Activated T-helper 2 cell treated with anti-CD3 and anti-CD28 coated beads, Interferon-gamma antibody, Interleukin-2, Interleukin-4, amounts not matched to agents 10 μg/mL and 5 μg/mL and 100 μg/mL, durations not matched to agents 14 hours and 24 hours and 36 hours (primary cell): ENCODE measurements at regions of chr12 and their contacts with region 1.

Region 1: GRCh38 chr12:122123051-122123760 is 44.6 kb downstream of the MLXIP start:
- DNase-seq: peak; percentile 54
- H3K4me3 Mint-ChIP-seq: no peak overlapping the region
- H3K27ac Mint-ChIP-seq: no peak overlapping the region
- H3K4me1 Mint-ChIP-seq: peaks cover 10% of the 10 kb centered on the region
- H3K27me3 Mint-ChIP-seq: no peaks in the 10 kb centered on the region

Region 2: DNA sequence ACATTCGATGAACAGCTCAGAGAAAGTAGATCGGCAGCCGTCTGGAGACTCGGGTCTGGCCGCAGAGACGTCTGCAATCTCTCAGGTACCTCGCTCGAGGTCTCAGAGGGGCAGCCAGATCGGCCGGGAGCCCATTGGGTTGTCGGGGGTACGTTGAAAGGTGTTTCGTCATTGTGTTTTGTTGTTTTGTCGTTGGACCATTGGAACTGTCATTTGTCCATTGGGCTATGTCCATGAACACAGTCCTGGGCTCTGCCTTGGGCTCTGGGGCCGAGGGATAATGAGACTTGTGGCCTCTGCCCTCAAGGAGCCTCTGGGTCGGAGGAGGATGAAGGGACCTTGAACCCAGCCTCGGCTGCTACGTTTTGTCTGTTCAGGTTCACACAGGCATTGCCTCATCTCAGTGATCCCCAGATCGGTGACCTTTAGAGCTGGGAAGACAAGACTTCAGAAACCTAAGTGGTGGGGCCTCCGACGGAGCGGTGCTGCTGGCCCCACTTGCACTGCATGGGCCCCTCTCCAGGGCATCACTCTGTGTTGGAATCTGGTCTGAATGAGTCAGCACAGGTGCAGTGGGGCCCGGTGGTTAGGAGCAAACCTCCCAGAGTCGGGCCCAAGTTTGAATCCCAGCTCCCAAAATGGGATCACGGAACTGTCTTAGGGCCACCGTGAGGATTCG is 68.2 kb before region 1 on chr12:
- intact Hi-C with region 1: loop called (anchors 1 kb)
- DNase-seq: no peak
- H3K4me3 Mint-ChIP-seq: no peak overlapping the region
- H3K27ac Mint-ChIP-seq: no peak overlapping the region
- H3K4me1 Mint-ChIP-seq: peaks cover 2% of the 10 kb centered on the region
- H3K27me3 Mint-ChIP-seq: no peaks in the 10 kb centered on the region